Breast epithelium (tissue), 4 donors: ENCODE measurements at regions of chr6 and their contacts with region 1.

Region 1: GRCh38 chr6:151738960-151739359 is 68.5 kb upstream of the ESR1 start:
- DNase-seq: no peak
- H3K4me3 ChIP-seq: no peak overlapping the region
- H3K27ac ChIP-seq: no peak overlapping the region
- H3K4me1 ChIP-seq: no peaks in the 10 kb centered on the region
- H3K27me3 ChIP-seq: no peaks in the 10 kb centered on the region
- CTCF ChIP-seq: no peak
- POLR2A ChIP-seq: no peak

Region 2: GRCh38 chr6:150426198-150426597 is 1312.8 kb before region 1 on chr6:
- intact Hi-C with region 1: no loop called
- DNase-seq: peak in 1 of 2 donors; percentile 41
- H3K4me3 ChIP-seq: no peak overlapping the region
- H3K27ac ChIP-seq: peak overlapping the region in 1 of 2 donors; percentile 7
- H3K4me1 ChIP-seq: no peaks in the 10 kb centered on the region
- H3K27me3 ChIP-seq: no peaks in the 10 kb centered on the region
- CTCF ChIP-seq: no peak
- POLR2A ChIP-seq: no peak

Region 3: DNA sequence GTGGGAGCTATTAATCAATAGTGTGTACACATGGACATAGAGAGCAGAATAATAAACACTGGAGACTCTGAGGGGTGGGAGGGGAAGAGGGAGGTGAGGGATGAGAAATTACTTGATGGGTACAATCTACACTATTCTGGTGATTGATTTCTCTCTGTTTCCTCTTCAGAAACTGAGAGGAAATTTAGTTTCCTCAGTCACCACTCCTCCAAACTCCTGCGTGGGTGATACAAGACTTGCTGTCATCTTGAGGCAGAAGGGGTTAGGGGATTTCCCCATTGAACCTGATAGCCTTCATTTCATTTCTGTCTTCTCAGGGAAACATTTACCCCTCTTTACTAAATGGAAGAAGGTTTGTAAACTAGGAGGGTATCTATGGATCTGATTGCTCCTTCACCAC is 15.8 kb before region 1 on chr6:
- intact Hi-C with region 1: no loop called
- DNase-seq: no peak
- H3K4me3 ChIP-seq: no peak overlapping the region
- H3K27ac ChIP-seq: no peak overlapping the region
- H3K4me1 ChIP-seq: no peaks in the 10 kb centered on the region
- H3K27me3 ChIP-seq: no peaks in the 10 kb centered on the region
- CTCF ChIP-seq: no peak
- POLR2A ChIP-seq: no peak

Region 4: GRCh38 chr6:152723398-152723797 is 984.4 kb after region 1 on chr6:
- intact Hi-C with region 1: loop called (anchors 5 kb)
- DNase-seq: no peak
- H3K4me3 ChIP-seq: no peak overlapping the region
- H3K27ac ChIP-seq: no peak overlapping the region
- H3K4me1 ChIP-seq: no peaks in the 10 kb centered on the region
- H3K27me3 ChIP-seq: no peaks in the 10 kb centered on the region
- CTCF ChIP-seq: no peak
- POLR2A ChIP-seq: no peak